PC-3 (cell line): ENCODE measurements at regions of chr5 and their contacts with region 1.

Region 1: DNA sequence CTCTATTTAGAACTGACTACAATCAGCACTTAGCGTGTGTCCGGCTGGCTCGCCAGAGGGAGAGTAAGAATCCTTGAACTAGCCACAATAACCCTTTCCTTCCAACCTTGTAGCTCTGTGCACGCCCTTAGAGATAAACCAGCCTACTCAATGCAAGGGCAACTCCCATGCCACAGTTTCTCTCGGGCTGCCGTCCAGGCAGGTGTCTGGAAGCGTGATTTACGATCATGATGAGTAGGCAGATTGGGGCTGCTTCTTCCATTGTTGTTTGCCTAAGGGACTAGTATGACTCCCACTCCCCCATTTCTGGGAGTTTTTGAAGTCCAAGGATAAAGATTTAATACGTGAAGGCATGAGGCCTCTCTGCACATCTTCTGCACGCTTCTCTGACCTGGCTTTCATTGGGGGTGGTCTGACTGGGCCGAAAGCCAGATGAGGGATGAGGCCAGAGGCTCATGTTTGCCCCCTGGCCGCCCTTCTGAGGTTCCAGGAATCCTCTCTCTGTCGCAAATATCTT is 134.0 kb upstream of the MYO10 start:
- DNase-seq: peak; percentile 97
- ATAC-seq: peak; percentile 48
- H3K4me3 ChIP-seq: no peak overlapping the region
- H3K27ac ChIP-seq: peak overlapping the region; percentile 12
- H3K4me1 ChIP-seq: peaks cover 27% of the 10 kb centered on the region
- H3K27me3 ChIP-seq: no peaks in the 10 kb centered on the region
- CTCF ChIP-seq: no peak

Region 2: DNA sequence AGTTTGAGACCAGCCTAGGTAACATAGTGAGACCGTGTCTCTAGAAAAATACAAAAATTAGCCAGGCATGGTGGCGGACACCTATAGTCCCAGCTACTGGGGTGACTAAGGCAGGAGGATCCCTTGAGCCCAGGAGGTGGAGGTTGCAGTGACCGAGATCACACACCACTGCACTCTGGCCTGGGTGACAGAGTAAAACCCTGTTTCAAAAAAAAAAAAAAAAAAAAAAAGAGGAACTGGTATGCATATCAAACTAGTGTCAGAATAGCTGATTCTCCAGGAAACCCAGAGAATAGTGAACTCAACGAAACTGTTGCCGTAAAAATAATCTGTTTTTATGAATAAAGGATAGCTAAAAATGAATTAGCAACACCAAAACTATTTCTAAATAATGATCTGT is 20.8 kb after region 1 on chr5:
- CTCF ChIA-PET with region 1: no interaction called
- POLR2A ChIA-PET with region 1: interaction called, 33 read pairs
- intact Hi-C with region 1: no loop called
- DNase-seq: no peak
- ATAC-seq: no peak
- H3K4me3 ChIP-seq: no peak overlapping the region
- H3K27ac ChIP-seq: no peak overlapping the region
- H3K4me1 ChIP-seq: peaks cover 13% of the 10 kb centered on the region
- H3K27me3 ChIP-seq: no peaks in the 10 kb centered on the region
- CTCF ChIP-seq: no peak

Region 3: GRCh38 chr5:17157916-17158529 is 88.0 kb after region 1 on chr5:
- CTCF ChIA-PET with region 1: interaction called, 5 read pairs
- POLR2A ChIA-PET with region 1: interaction called, 17 read pairs
- intact Hi-C with region 1: no loop called
- DNase-seq: peak; percentile 35
- ATAC-seq: no peak
- H3K4me3 ChIP-seq: no peak overlapping the region
- H3K27ac ChIP-seq: no peak overlapping the region
- H3K4me1 ChIP-seq: peaks cover 30% of the 10 kb centered on the region
- H3K27me3 ChIP-seq: no peaks in the 10 kb centered on the region
- CTCF ChIP-seq: no peak